Mammary epithelial cell (primary cell): ENCODE measurements at regions of chr5 and their contacts with region 1.

Region 1: DNA sequence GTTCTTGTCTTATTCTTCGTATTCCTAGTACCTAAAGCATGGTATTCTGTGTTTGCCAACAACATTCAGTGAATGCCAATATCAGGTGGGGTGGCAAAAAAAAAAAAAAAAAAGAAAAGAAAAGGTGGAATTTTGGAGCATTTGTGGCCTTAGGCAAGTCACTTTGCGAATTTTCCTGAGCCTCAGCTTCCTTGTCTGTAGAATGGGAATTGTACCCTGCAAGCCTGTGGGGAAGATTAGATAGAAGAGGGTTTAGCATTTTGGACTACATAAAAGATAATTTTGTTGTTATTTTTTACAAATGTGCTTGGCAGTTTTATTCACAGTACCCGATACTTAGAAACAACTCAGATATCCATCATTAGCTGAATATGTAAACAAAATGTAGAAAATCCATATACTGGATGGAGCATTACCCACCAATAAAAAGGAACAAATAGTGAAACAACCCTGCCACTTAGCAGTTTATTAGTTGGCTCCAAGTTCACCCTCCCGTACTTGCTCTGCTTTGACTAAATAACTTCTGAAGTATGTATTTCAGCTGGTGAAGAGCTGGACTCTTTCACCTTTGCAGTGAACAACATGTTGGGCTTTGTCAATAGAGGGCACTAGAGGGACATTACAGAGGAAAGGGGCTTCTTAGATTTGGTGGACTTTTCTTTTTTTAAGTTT is 13.6 kb downstream of the UBE2D2 start:
- DNase-seq: no peak
- H3K4me3 ChIP-seq: no peak overlapping the region
- H3K27ac ChIP-seq: no peak overlapping the region
- H3K4me1 ChIP-seq: peaks cover 4% of the 10 kb centered on the region
- H3K27me3 ChIP-seq: no peaks in the 10 kb centered on the region
- CTCF ChIP-seq: peak; percentile 72 to 76

Region 2: GRCh38 chr5:139232147-139232724 is 342.5 kb before region 1 on chr5:
- CTCF ChIA-PET with region 1: no interaction called
- dilution Hi-C with region 1: no loop called
- in situ Hi-C with region 1: no loop called
- intact Hi-C with region 1: no loop called
- DNase-seq: peak; percentile 95
- H3K4me3 ChIP-seq: no peak overlapping the region
- H3K27ac ChIP-seq: no peak overlapping the region
- H3K4me1 ChIP-seq: no peaks in the 10 kb centered on the region
- H3K27me3 ChIP-seq: no peaks in the 10 kb centered on the region
- CTCF ChIP-seq: no peak

Region 3: GRCh38 chr5:139495638-139496435 is 78.9 kb before region 1 on chr5:
- CTCF ChIA-PET with region 1: no interaction called
- dilution Hi-C with region 1: loop called (anchors 5 kb)
- in situ Hi-C with region 1: no loop called
- intact Hi-C with region 1: no loop called
- DNase-seq: peak; percentile 75
- H3K4me3 ChIP-seq: no peak overlapping the region
- H3K27ac ChIP-seq: no peak overlapping the region
- H3K4me1 ChIP-seq: peaks cover 19% of the 10 kb centered on the region
- H3K27me3 ChIP-seq: no peaks in the 10 kb centered on the region
- CTCF ChIP-seq: no peak

Region 4: GRCh38 chr5:139524932-139525585 is 49.7 kb before region 1 on chr5:
- CTCF ChIA-PET with region 1: no interaction called
- dilution Hi-C with region 1: loop called (anchors 5 kb)
- in situ Hi-C with region 1: no loop called
- intact Hi-C with region 1: no loop called
- DNase-seq: no peak
- H3K4me3 ChIP-seq: no peak overlapping the region
- H3K27ac ChIP-seq: no peak overlapping the region
- H3K4me1 ChIP-seq: no peaks in the 10 kb centered on the region
- H3K27me3 ChIP-seq: no peaks in the 10 kb centered on the region
- CTCF ChIP-seq: no peak

Region 5: GRCh38 chr5:139651853-139652787 is 77.3 kb after region 1 on chr5:
- CTCF ChIA-PET with region 1: no interaction called
- dilution Hi-C with region 1: loop called (anchors 10 kb)
- in situ Hi-C with region 1: no loop called
- intact Hi-C with region 1: no loop called
- DNase-seq: peak; percentile 92
- H3K4me3 ChIP-seq: peak overlapping the region; percentile 6 to 23 (median 21)
- H3K27ac ChIP-seq: peak overlapping the region; percentile 74
- H3K4me1 ChIP-seq: peaks cover 56% of the 10 kb centered on the region
- H3K27me3 ChIP-seq: no peaks in the 10 kb centered on the region
- CTCF ChIP-seq: no peak

Region 6: DNA sequence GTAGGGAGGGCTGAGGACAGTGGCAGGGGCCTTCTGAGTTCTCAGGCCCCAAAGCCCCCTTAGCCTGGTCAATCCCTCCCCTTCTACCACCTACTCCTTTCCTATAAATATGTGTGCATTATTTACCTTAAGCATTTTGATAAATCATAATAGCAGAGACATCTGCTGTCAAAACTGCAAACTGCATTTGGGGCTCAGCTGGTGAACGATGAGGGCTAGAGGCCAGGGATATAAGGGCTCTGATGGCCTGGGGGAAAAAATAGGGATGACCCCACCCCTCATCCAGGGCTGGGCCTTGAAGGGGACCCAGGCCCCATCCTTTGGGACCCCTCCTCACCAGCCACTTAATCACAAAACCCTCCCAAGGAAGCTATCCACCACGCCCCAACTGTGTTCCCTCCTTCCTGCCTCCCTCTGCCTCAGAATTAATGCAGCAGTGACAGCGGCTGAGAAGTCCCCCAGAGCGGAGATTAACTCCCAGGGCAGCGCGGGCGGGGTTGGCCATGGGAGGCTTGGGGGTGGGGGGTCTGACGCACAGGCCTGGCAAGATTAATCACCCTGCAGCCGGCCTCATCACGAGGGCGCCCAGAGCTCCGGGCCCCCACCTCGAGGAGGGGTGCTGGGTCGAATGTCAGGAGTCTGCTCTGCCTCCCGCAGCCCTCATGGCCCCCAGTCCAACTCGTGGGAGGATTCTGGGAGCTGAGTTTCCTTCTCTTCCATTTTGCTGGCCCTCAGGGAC is 115.5 kb after region 1 on chr5:
- CTCF ChIA-PET with region 1: interaction called, 24 read pairs
- dilution Hi-C with region 1: no loop called
- in situ Hi-C with region 1: no loop called
- intact Hi-C with region 1: loop called (anchors 1 kb)
- DNase-seq: peak; percentile 28
- H3K4me3 ChIP-seq: no peak overlapping the region
- H3K27ac ChIP-seq: no peak overlapping the region
- H3K4me1 ChIP-seq: peaks cover under 1% of the 10 kb centered on the region
- H3K27me3 ChIP-seq: no peaks in the 10 kb centered on the region
- CTCF ChIP-seq: peak; percentile 59 to 64

Region 7: GRCh38 chr5:139711067-139711905 is 136.5 kb after region 1 on chr5:
- CTCF ChIA-PET with region 1: no interaction called
- dilution Hi-C with region 1: loop called (anchors 10 kb)
- in situ Hi-C with region 1: no loop called
- intact Hi-C with region 1: no loop called
- DNase-seq: peak; percentile 38
- H3K4me3 ChIP-seq: peak overlapping the region; percentile 42 to 51 (median 46)
- H3K27ac ChIP-seq: no peak overlapping the region
- H3K4me1 ChIP-seq: peaks cover 11% of the 10 kb centered on the region
- H3K27me3 ChIP-seq: no peaks in the 10 kb centered on the region
- CTCF ChIP-seq: no peak

Region 8: DNA sequence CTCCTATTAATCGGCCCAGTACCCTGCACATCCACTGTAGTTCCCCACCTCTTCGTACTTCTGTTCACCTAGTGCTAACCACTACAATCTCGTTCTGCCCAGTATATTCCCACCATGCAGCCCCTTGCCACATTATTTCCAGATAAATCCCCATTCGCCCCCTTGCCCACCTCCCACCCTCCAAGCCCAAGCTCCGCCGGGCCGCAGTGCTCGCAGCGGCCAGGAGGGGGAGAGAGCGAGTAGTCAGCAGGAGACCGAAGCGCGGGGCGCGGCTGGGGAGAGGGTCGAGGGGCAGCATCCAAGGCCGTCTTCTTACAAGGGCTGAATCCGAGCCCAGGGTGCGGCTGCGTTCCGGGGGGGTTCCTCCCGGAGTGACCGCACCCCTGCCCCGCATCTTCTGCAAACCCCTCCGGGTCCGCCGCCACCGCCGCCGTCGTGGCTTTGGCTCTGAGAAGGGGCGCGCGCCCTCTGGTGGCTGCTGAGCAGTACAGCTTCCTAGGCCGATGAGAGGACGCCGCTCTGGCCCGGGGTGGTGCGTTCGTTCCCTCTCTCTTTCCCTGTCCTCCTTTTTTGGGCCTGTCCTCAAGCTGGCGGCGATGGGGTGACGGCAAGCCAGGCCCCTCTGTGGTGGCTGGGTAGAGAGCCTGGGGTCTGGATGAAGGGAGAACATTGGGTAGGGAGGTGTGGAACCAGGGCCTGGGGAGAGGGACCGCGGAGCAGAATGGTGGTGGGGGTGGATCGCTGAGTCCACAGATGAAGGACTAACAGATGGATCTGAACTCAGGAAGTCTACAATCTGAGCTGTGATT is 190.8 kb after region 1 on chr5:
- CTCF ChIA-PET with region 1: no interaction called
- dilution Hi-C with region 1: no loop called
- in situ Hi-C with region 1: no loop called
- intact Hi-C with region 1: loop called (anchors 1 kb)
- DNase-seq: peak; percentile 56
- H3K4me3 ChIP-seq: peak overlapping the region; percentile 53 to 76 (median 59)
- H3K27ac ChIP-seq: no peak overlapping the region
- H3K4me1 ChIP-seq: no peaks in the 10 kb centered on the region
- H3K27me3 ChIP-seq: no peaks in the 10 kb centered on the region
- CTCF ChIP-seq: peak; percentile 55 to 69